ENCODE measurements at regions of chr17 and their contacts with region 1.

Region 1: GRCh38 chr17:37489197-37490001 is at the start of gene DUSP14:
- DNase-seq: peak; percentile 63 to 97 (median 80)

Region 2: DNA sequence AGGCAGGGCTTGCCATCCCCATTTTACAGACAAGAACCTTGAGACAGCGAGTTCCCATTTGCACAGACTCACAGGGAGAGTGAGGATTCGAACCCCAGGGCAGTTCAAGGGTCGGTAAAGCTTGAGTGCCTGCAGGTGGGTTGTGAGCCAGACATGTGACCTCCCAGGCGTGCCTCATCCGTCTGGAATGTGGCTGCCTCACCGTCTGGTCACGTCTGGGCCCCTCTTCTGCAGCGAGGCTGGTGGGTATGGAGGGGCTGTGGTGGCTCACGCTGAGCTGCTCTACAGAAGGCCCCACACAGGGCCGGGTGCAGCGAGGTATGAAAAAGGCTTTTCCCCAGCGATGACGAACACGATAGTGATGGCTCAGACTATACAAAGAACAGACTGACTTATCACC is 587.9 kb before region 1 on chr17:
- intact Hi-C with region 1: no loop called
- DNase-seq: peak in 1 of 10 donors; percentile 61

Region 3: GRCh38 chr17:37174205-37174604 is 315.2 kb before region 1 on chr17:
- intact Hi-C with region 1: no loop called
- DNase-seq: peak in 5 of 10 donors; percentile 19 to 70 (median 42)

Region 4: GRCh38 chr17:37300683-37301082 is 188.7 kb before region 1 on chr17:
- intact Hi-C with region 1: no loop called
- DNase-seq: no peak

Region 5: GRCh38 chr17:37310940-37311339 is 178.5 kb before region 1 on chr17:
- intact Hi-C with region 1: no loop called
- DNase-seq: no peak

Region 6: DNA sequence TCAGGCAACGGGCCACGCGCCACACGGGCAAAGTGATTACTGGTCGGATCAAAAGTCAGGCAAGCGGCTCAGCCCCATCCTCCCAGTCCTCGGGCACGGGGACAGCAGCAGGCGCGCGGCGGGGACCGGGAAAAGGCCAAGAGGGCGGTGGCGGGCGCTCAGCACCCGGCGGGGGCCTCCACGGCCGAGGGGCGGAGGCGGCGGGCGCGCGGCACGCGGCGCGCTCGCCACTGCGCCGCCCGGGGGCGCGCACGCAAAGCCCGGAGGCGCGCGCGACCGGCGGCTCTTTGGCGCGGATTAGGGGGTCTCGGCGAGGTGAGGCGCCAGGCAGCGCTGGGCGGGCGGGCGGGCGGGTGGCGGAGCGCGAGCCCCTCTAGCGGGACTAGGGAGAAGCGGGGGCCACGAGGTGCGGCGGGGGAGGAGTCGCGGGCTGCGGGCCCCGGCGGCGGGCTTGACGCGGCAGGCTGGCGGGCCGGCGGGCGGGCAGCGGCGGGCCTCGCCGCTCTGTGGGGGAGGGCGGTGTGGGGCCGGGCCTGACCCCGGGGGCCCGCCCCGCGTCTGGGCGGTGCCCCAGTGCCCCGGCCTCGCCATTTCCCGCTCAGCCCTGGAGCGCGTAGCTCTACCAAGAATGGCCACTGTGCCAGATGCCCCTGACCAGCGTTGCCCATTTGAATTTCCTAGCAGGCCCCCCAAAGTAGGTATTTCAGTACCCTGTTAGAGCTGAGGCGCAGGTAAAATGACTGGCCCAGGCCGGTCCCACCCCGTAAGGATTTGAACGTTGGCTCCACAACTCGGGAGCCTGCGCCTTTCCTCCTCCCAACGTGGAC is 82.6 kb before region 1 on chr17 and contains the starts of genes ACACA and TADA2A:
- intact Hi-C with region 1: loop called (anchors 2 kb)
- DNase-seq: peak; percentile 49 to 95 (median 61)

Region 7: GRCh38 chr17:37609170-37610040 is 120.0 kb after region 1 on chr17 and contains the start of gene SYNRG:
- intact Hi-C with region 1: loop called (anchors 10 kb)
- DNase-seq: peak; percentile 93 to 99 (median 96)